Panc1 (cell line): ENCODE measurements at regions of chr6 and their contacts with region 1.

Region 1: GRCh38 chr6:4155848-4156466 is 20.6 kb upstream of the ECI2 start:
- DNase-seq: peak; percentile 62
- ATAC-seq: peak; percentile 95
- H3K4me3 ChIP-seq: no peak overlapping the region
- H3K27ac ChIP-seq: no peak overlapping the region
- H3K4me1 ChIP-seq: no peaks in the 10 kb centered on the region
- H3K27me3 ChIP-seq: no peaks in the 10 kb centered on the region
- CTCF ChIP-seq: peak; percentile 90

Region 2: GRCh38 chr6:4055420-4056041 is 100.4 kb before region 1 on chr6:
- CTCF ChIA-PET with region 1: no interaction called
- POLR2A ChIA-PET with region 1: no interaction called
- in situ Hi-C with region 1: no loop called
- intact Hi-C with region 1: loop called (anchors 5 kb)
- DNase-seq: peak; percentile 87
- ATAC-seq: peak; percentile 88
- H3K4me3 ChIP-seq: no peak overlapping the region
- H3K27ac ChIP-seq: no peak overlapping the region
- H3K4me1 ChIP-seq: 0 out of 2 replicates have a peak, but pooled peaks cover 5% of the 10 kb centered on the region
- H3K27me3 ChIP-seq: no peaks in the 10 kb centered on the region
- CTCF ChIP-seq: peak; percentile 58; the same call in 1 of the 2 replicates